ENCODE measurements at regions of chr22 and their contacts with region 1.

Region 1: GRCh38 chr22:19970479-19971275 is 29.1 kb upstream of the TXNRD2 start:
- DNase-seq: peak; percentile 94
- H3K4me3 Mint-ChIP-seq: no peak overlapping the region
- H3K27ac Mint-ChIP-seq: no peak overlapping the region
- H3K4me1 Mint-ChIP-seq: peaks cover 3% of the 10 kb centered on the region
- H3K27me3 Mint-ChIP-seq: no peaks in the 10 kb centered on the region

Region 2: DNA sequence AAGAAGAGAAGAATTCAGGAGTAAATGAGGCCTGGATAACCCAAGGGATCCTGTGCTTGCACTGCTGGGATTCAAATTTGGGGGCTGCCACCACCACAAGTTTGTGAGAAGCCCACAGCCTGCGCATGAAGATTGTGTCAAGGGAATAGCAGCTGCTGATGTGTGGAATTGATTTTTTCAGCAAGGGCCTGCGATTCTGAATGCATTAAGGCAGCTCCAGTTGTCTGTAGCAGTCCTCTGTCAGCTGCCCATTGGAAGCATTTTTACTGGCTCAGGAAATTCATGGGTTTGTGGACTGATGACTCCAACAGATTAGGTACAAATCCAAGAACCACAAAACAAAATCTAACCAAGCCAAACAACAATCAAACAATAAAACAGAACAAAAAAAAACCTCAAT is 32.0 kb after region 1 on chr22:
- intact Hi-C with region 1: no loop called
- DNase-seq: no peak
- H3K4me3 Mint-ChIP-seq: no peak overlapping the region
- H3K27ac Mint-ChIP-seq: no peak overlapping the region
- H3K4me1 Mint-ChIP-seq: no peaks in the 10 kb centered on the region
- H3K27me3 Mint-ChIP-seq: peaks cover 18% of the 10 kb centered on the region

Region 3: GRCh38 chr22:20016734-20017621 is 46.3 kb after region 1 on chr22 and contains the start of gene ARVCF:
- intact Hi-C with region 1: loop called (anchors 1 kb)
- DNase-seq: peak; percentile 98
- H3K4me3 Mint-ChIP-seq: peak within 1 kb of the TSS; percentile 89
- H3K27ac Mint-ChIP-seq: no peak within 1 kb of the TSS
- H3K4me1 Mint-ChIP-seq: peaks cover 16% of the 10 kb centered on the region
- H3K27me3 Mint-ChIP-seq: peaks cover 25% of the 10 kb centered on the region
- total RNA-seq, gene ARVCF: 2.6 and 4.1 TPM in 2 replicates

Region 4: GRCh38 chr22:20027966-20028854 is 57.5 kb after region 1 on chr22:
- intact Hi-C with region 1: loop called (anchors 1 kb)
- DNase-seq: no peak
- H3K4me3 Mint-ChIP-seq: no peak overlapping the region
- H3K27ac Mint-ChIP-seq: no peak overlapping the region
- H3K4me1 Mint-ChIP-seq: peaks cover 13% of the 10 kb centered on the region
- H3K27me3 Mint-ChIP-seq: no peaks in the 10 kb centered on the region

Region 5: GRCh38 chr22:20079745-20080444 is 109.2 kb after region 1 on chr22 and contains the start of gene DGCR8:
- intact Hi-C with region 1: loop called (anchors 5 kb)
- DNase-seq: peak; percentile 93
- H3K4me3 Mint-ChIP-seq: peak within 1 kb of the TSS; percentile 91
- H3K27ac Mint-ChIP-seq: peak within 1 kb of the TSS; percentile 85
- H3K4me1 Mint-ChIP-seq: peaks cover 33% of the 10 kb centered on the region
- H3K27me3 Mint-ChIP-seq: no peaks in the 10 kb centered on the region
- total RNA-seq, gene DGCR8: 73.2 and 74.2 TPM in 2 replicates

Region 6: GRCh38 chr22:20130739-20131596 is 160.3 kb after region 1 on chr22:
- intact Hi-C with region 1: loop called (anchors 1 kb)
- DNase-seq: peak; percentile 92
- H3K4me3 Mint-ChIP-seq: peak overlapping the region; percentile 52
- H3K27ac Mint-ChIP-seq: no peak overlapping the region
- H3K4me1 Mint-ChIP-seq: peaks cover 13% of the 10 kb centered on the region
- H3K27me3 Mint-ChIP-seq: no peaks in the 10 kb centered on the region

Measured in activated CD4-positive, alpha-beta T cell treated with anti-CD3 and anti-CD28 coated beads, Interleukin-2, amount 10 ng/mL, durations not matched to agents 24 days and 14 days (primary cell).